Ovary (tissue), 10 donors: ENCODE measurements at regions of chrX and their contacts with region 1.

Region 1: DNA sequence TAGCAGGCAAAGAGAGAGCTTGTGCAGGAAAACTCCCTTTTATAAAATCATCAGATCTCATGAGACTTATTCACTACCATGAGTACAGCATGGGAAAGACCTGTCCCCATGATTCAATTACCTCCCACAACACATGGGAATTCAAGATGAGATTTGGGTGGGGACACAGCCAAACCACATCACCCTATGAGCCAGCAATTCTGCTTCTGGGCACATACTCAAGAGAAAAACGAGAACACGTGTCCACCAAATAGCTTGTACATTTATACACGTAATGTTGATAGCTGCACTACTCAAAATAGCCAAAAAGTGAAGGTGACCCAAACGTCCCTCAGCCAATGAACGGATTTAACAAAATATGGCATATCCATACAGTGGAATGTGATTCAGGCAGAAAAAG is 94.5 kb upstream of the DHRSX start:
- DNase-seq: no peak
- H3K4me3 ChIP-seq: no peak overlapping the region
- H3K27ac ChIP-seq: no peak overlapping the region
- H3K4me1 ChIP-seq: no peaks in the 10 kb centered on the region
- H3K27me3 ChIP-seq: no peaks in the 10 kb centered on the region
- CTCF ChIP-seq: no peak
- EP300 ChIP-seq: no peak
- POLR2A ChIP-seq: no peak

Region 2: GRCh38 chrX:1649621-1650020 is 945.6 kb before region 1 on chrX:
- intact Hi-C with region 1: loop called in 3 of 4 experiments (anchors 5 to 10 kb)
- DNase-seq: no peak
- H3K4me3 ChIP-seq: no peak overlapping the region
- H3K27ac ChIP-seq: no peak overlapping the region
- H3K4me1 ChIP-seq: no peaks in the 10 kb centered on the region
- H3K27me3 ChIP-seq: no peaks in the 10 kb centered on the region
- CTCF ChIP-seq: no peak
- EP300 ChIP-seq: no peak
- POLR2A ChIP-seq: no peak

Region 3: DNA sequence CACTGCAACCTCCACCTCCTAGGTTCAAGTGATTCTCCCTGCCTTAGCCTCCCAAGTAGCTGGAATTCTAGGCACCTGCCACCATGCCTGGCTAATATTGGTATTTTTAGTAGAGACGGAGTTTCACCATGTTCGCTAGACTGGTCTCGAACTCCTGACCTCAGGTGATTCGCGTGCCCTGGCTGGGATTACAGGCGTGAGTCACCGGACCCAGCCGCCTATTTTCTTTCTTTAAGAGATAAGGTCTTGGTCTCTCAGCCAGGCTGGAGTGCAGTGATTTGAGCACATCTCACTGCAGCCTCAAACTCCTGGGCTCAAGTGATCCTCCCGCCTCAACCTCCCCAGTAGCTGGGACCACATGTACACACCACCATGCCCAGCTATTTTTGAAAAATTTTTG is 261.0 kb before region 1 on chrX:
- intact Hi-C with region 1: loop called in 1 of 4 experiments (anchors 10 kb)
- DNase-seq: no peak
- H3K4me3 ChIP-seq: no peak overlapping the region
- H3K27ac ChIP-seq: no peak overlapping the region
- H3K4me1 ChIP-seq: no peaks in the 10 kb centered on the region
- H3K27me3 ChIP-seq: no peaks in the 10 kb centered on the region
- CTCF ChIP-seq: no peak
- EP300 ChIP-seq: no peak
- POLR2A ChIP-seq: no peak

Region 4: GRCh38 chrX:2677764-2678163 is 82.5 kb after region 1 on chrX:
- intact Hi-C with region 1: no loop called
- DNase-seq: peak; percentile 80 to 89 (median 88)
- H3K4me3 ChIP-seq: no peak overlapping the region
- H3K27ac ChIP-seq: no peak overlapping the region
- H3K4me1 ChIP-seq: peaks cover 13% of the 10 kb centered on the region
- H3K27me3 ChIP-seq: no peaks in the 10 kb centered on the region
- CTCF ChIP-seq: no peak
- EP300 ChIP-seq: no peak
- POLR2A ChIP-seq: no peak